Dendritic cell treated with granulocyte-macrophage colony-stimulating factor and Interleukin-4, amounts not matched to agents 40 ng/mL and 50 ng/mL, for 4 days (primary cell): ENCODE measurements at regions of chr11 and their contacts with region 1.

Region 1: GRCh38 chr11:78350646-78351165 is 66.9 kb downstream of the GAB2 start:
- H3K4me3 Mint-ChIP-seq: peak overlapping the region; percentile 43
- H3K27ac Mint-ChIP-seq: peak overlapping the region; percentile 98
- H3K4me1 Mint-ChIP-seq: peaks cover 91% of the 10 kb centered on the region
- H3K27me3 Mint-ChIP-seq: no peaks in the 10 kb centered on the region

Region 2: DNA sequence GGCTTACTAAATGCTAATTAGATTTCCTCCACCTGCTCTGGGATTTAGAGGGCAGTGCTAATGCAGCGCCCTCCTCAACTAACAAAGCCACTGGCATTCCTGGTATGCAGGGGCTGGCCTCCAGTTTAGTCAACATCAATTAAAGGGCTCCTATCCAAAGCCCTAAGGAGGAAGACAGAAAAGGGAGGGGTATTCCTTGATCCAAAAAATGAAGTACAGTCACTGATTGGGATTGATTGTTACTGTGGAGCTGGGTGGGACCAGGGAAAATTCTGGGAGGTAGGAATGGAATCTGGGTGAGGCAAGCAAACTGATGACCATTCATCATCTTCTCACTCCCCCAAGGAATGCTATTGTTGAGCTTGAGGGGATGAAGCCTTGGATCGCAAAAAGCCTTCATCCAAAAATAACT is 14.7 kb after region 1 on chr11:
- intact Hi-C with region 1: loop called (anchors 1 kb)
- H3K4me3 Mint-ChIP-seq: no peak overlapping the region
- H3K27ac Mint-ChIP-seq: peak overlapping the region; percentile 63
- H3K4me1 Mint-ChIP-seq: peaks cover 71% of the 10 kb centered on the region
- H3K27me3 Mint-ChIP-seq: no peaks in the 10 kb centered on the region

Region 3: GRCh38 chr11:78397387-78397786 is 46.7 kb after region 1 on chr11:
- intact Hi-C with region 1: no loop called
- H3K4me3 Mint-ChIP-seq: no peak overlapping the region
- H3K27ac Mint-ChIP-seq: no peak overlapping the region
- H3K4me1 Mint-ChIP-seq: peaks cover 78% of the 10 kb centered on the region
- H3K27me3 Mint-ChIP-seq: no peaks in the 10 kb centered on the region